ENCODE measurements at regions of chr18 and their contacts with region 1.

Region 1: GRCh38 chr18:45686891-45687611 is 36.9 kb upstream of the SLC14A1 start:
- DNase-seq: peak; percentile 28 to 44
- ATAC-seq: peak; percentile 55

Region 2: GRCh38 chr18:45482286-45482685 is 204.8 kb before region 1 on chr18:
- intact Hi-C with region 1: no loop called
- DNase-seq: no peak
- ATAC-seq: no peak

Region 3: DNA sequence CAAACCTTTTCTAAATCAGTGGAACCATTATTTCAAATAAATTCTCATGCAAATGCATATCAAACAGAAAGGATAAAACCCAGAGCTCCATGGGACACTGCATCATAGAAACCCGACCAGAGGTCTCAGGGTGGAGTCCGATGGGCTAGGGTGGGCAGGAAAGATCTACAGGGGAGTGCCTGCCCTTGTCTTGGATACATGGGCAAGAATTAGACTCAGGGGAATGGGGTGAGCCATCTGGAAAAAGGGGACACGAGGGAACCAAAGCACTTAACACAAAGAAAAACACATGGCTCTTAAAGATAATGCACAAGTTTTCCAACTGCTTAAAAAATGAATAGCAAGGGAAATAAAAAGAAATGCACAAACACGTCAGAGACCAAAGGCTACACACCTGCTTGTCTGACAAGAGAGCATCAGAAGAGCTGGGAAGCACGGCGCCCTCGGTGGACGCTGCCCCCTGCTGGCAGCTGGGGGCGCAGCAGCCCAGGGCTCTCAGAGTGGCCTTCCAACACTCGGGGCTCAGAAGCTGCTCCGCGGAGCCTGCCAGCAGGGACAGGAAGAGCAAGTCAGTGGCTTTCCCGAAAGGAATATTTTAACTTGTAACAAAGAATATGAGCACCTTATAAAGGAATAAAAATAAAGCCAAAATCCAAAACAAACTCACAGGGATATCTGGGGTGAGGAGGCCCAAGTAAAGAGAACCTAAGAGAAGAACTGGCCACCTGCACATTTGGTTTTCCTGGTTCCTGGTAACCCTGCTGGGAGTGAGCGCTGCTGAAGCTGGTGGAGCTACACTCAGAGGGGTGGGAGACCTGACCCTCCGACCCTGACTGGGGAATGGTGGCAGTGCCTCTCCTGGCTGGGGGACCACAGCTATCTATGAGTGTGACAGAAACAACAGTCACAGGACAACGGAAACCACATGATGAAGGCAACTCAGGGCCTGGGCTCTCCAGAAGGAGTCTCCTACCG is 192.9 kb after region 1 on chr18:
- intact Hi-C with region 1: loop called in 1 of 2 experiments (anchors 10 kb)
- DNase-seq: peak; percentile 28 to 64
- ATAC-seq: peak; percentile 92

Measured in left colon (tissue), 2 donors.